ENCODE measurements at regions of chr16 and their contacts with region 1.

Region 1: GRCh38 chr16:47672475-47672874 is 211.3 kb downstream of the PHKB start:
- DNase-seq: no peak
- H3K4me3 ChIP-seq: no peak overlapping the region
- H3K27ac ChIP-seq: no peak overlapping the region
- H3K4me1 ChIP-seq: no peaks in the 10 kb centered on the region
- H3K27me3 ChIP-seq: no peaks in the 10 kb centered on the region
- CTCF ChIP-seq: no peak

Region 2: DNA sequence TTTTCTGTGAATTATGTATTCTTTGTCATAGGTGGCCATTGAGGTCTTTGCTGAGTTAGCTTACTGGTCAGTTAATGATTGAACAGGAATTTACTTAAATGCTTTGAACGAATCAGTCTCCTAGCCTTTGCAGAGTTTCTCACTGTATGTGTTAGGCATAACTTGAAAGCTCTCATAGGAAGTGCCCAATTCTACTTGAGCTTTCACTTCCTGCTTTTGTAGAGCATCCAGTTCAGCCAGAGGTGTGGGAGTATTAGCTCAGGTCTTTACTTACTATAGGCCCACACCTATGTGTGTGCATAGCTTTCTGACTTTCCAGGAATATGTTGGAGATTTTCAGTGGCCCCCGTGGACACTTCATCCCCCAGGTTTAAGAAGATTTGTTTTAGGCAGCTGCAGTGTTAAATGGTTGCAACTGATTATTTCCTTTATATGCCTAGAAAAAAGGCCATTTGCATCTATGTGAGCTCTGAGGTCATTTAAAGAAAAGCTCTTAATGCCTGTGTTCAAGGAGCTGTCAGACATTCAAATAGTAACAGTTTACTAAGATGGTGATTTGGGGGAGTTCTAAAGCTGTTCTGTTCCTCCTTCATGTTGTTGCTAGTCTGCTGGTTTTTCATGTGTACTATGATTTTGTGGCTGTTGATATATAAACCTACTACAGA is 149.0 kb before region 1 on chr16:
- CTCF ChIA-PET with region 1: no interaction called
- POLR2A ChIA-PET with region 1: interaction called, 11 read pairs
- intact Hi-C with region 1: no loop called
- DNase-seq: no peak
- H3K4me3 ChIP-seq: no peak overlapping the region
- H3K27ac ChIP-seq: no peak overlapping the region
- H3K4me1 ChIP-seq: no peaks in the 10 kb centered on the region
- H3K27me3 ChIP-seq: no peaks in the 10 kb centered on the region
- CTCF ChIP-seq: no peak

Measured in PC-9 (cell line).